Activated B cell treated with CpG ODN at 0.5 μM for 24 hours (primary cell): ENCODE measurements at regions of chr7 and their contacts with region 1.

Region 1: GRCh38 chr7:2288503-2288902 is 25.7 kb downstream of the SNX8 start:
- DNase-seq: peak; percentile 34
- ATAC-seq: peak; percentile 89
- H3K4me3 Mint-ChIP-seq: peak overlapping the region; percentile 73
- H3K27ac Mint-ChIP-seq: peak overlapping the region; percentile 97
- H3K4me1 Mint-ChIP-seq: peaks cover 49% of the 10 kb centered on the region
- H3K27me3 Mint-ChIP-seq: no peaks in the 10 kb centered on the region
- CTCF ChIP-seq: no peak

Region 2: DNA sequence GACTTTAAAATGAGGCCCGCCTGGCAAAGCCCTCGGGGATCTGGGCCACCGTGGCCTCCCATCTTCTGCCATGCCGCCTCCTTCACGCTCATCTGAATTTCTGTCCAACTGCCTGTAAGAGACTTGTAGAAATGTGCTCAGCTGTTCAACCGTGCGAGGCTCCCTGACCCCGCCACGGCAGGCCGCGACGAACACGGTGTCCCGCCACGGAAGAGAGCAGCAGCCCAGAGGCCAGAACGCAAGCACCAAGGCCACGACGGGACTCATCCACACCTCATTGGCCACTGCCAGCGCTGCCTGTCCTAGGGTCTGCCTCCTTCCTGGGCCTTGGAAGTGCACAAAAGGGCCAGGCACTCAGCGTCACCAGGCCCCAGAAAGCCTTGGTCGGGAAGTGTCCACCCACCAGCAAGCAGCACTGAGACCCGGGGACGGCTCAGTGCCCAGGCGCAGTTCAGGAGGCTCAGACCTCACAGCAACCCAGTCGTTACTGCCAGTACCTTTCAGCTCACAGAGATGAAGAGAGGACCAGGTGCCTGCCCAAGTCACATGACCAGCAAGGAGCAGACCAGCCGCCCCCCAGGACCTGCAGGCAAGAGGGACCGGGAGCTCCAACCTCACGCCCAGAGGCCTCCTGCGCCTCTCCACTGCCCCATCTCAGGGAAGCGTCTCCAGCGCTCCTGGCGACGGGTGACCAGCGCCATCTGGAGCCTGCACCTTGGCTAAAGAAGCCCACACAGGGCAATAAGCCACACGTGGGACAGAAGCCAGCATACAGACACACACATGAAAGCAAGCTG is 141.6 kb before region 1 on chr7:
- CTCF ChIA-PET with region 1: no interaction called
- POLR2A ChIA-PET with region 1: no interaction called
- intact Hi-C with region 1: no loop called
- DNase-seq: no peak
- ATAC-seq: no peak
- H3K4me3 Mint-ChIP-seq: no peak overlapping the region
- H3K27ac Mint-ChIP-seq: no peak overlapping the region
- H3K4me1 Mint-ChIP-seq: no peaks in the 10 kb centered on the region
- H3K27me3 Mint-ChIP-seq: no peaks in the 10 kb centered on the region
- CTCF ChIP-seq: no peak

Region 3: GRCh38 chr7:2299131-2299829 is 10.8 kb after region 1 on chr7:
- CTCF ChIA-PET with region 1: interaction called, 3 read pairs
- POLR2A ChIA-PET with region 1: interaction called, 32 read pairs
- intact Hi-C with region 1: loop called (anchors 1 kb)
- DNase-seq: peak; percentile 49
- ATAC-seq: peak; percentile 72
- H3K4me3 Mint-ChIP-seq: peak overlapping the region; percentile 77
- H3K27ac Mint-ChIP-seq: peak overlapping the region; percentile 96
- H3K4me1 Mint-ChIP-seq: peaks cover 76% of the 10 kb centered on the region
- H3K27me3 Mint-ChIP-seq: no peaks in the 10 kb centered on the region
- CTCF ChIP-seq: no peak

Region 4: DNA sequence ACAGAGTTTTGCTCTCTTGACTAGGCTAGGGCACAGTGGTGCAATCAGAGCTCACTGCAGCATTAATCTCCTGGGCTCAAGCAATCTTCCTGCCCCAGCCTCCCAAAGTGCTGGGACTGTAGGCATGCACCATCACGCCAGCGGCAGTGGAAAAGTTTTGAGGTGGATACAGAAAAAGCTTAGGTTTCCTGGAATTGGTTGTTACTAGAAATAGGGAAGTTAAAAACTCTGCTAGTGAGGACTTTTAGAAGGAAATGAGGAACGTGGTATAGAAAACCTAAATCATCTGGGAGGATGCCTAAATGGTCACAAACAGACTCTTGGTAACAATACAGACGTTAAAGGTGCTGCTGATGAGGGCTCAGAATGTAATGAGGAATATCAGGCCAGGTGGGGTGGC is 36.7 kb after region 1 on chr7:
- CTCF ChIA-PET with region 1: no interaction called
- POLR2A ChIA-PET with region 1: no interaction called
- intact Hi-C with region 1: no loop called
- DNase-seq: no peak
- ATAC-seq: no peak
- H3K4me3 Mint-ChIP-seq: no peak overlapping the region
- H3K27ac Mint-ChIP-seq: no peak overlapping the region
- H3K4me1 Mint-ChIP-seq: peaks cover 5% of the 10 kb centered on the region
- H3K27me3 Mint-ChIP-seq: no peaks in the 10 kb centered on the region
- CTCF ChIP-seq: no peak